Right cardiac atrium (tissue), 5 donors: ENCODE measurements at regions of chr1 and their contacts with region 1.

Region 1: DNA sequence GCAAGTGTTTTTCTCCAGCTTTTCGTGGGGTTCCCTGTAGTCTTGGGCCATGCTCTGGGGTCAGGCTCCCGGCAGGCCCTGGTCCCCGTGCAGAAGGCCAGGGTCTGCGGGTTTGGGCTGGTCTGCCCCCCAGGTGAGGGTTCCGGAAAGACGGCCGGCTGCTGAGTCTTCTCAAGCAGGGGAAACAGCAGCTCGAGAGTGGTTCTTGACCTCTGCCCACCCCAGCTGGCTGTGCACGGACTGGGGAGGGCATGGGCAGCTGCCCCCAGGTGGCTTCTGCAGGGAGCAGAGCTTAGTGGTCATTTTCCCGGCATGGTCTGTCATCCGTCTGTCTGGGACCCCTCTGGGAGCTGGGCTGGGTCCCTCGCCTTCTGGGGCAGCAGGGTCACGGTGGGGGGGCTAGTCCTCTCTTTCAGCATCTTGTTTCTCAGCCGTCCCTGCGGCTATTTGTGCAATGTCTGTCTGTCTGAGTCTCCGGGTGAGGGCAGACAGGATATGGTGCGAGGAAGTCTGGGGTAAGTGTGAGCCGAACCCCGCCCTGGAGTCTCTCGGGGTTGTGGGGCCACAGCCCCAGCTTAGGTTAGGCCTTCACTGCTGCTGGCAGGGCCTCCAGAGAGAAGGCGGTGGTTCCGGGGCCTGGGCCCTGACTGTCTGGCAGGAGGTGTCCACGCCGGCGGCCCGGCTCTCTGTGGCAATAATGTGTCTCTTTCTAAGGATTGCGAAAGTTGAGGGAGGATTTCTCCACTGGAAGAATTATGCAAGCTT is 6.1 kb downstream of the SKI start:
- DNase-seq: peak; percentile 96 to 98 (median 96)
- ATAC-seq: peak; percentile 81
- H3K4me3 ChIP-seq: peak overlapping the region; percentile 2
- H3K27ac ChIP-seq: peak overlapping the region; percentile 77
- H3K4me1 ChIP-seq: peaks cover 45% of the 10 kb centered on the region
- H3K27me3 ChIP-seq: no peaks in the 10 kb centered on the region

Region 2: GRCh38 chr1:1703796-1704195 is 530.4 kb before region 1 on chr1:
- intact Hi-C with region 1: no loop called
- DNase-seq: peak in 1 of 3 donors; percentile 46
- ATAC-seq: no peak
- H3K4me3 ChIP-seq: no peak overlapping the region
- H3K27ac ChIP-seq: no peak overlapping the region
- H3K4me1 ChIP-seq: no peaks in the 10 kb centered on the region
- H3K27me3 ChIP-seq: no peaks in the 10 kb centered on the region

Region 3: DNA sequence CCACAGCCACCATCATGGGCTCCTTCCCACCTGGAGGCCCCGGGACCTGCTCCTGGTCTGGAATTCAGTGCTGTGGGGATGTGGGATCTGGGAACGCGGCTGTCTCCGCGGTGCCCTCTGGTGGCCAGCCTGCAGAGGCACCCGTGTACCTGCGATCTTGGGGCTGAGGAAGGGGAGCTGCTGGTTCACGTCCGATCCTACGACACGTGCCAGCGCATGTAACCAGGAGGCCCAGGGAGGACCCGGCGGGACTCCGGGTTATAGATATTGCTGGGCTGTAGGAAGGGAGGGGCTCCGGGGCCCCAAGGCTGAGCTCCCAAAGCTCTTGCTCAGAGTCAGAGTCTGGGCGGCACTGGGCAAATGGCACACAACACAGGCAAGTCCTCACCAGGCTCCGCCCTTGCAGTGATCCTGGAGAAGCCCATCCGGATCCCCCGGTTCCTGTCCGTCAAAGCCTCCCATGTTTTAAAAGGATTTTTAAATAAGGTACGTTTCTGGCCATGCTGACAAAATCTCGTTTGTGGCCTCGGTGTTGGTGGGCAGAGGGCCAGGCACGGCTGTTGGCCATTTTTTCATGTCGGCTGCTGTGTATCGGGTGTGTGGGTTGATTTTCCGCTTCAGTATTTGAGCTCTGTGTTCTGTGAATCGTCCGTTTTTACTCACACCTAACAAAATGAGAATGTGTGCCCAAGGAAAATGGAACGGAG is 59.7 kb before region 1 on chr1:
- intact Hi-C with region 1: no loop called
- DNase-seq: peak; percentile 63 to 86 (median 80)
- ATAC-seq: peak; percentile 67 to 80
- H3K4me3 ChIP-seq: peak overlapping the region; percentile 36
- H3K27ac ChIP-seq: no peak overlapping the region
- H3K4me1 ChIP-seq: no peaks in the 10 kb centered on the region
- H3K27me3 ChIP-seq: no peaks in the 10 kb centered on the region

Region 4: DNA sequence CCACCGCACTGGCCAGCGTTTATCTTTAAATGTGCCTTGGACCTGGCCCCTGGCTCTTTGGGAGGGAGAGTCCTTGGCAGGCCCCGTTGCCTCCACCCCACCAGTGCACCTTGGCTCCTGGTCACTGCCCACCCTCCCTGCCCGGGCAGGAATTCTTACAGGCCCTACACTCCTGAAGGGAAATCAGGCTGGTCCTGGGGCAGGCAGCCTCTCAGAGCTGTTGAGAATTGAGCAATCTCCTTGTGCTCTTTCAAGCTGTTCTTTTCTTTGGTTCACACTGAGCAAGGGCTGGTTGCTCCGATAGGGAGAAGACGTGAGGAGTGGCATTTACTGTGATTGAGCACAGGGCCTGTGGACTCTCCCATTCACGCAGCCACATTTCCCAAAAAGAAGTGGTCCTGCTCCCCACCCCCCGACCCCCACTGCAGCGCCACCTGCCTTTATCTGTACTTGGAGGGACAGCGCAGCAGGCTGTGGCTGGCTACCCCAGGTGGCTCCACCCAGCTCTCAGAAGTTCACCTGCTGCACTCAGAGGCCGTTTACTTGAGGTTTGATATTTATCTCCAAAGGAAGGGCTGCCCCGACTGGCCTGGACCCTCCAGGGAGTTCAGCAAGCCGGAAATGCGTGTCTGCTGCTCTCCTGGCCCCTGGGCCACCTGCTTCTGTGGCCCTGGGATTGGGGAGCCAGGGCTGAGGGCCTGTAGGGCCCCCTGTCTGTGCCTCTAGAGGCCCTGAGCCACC is 41.8 kb after region 1 on chr1:
- intact Hi-C with region 1: no loop called
- DNase-seq: peak; percentile 42 to 73 (median 72)
- ATAC-seq: peak; percentile 23 to 36
- H3K4me3 ChIP-seq: no peak overlapping the region
- H3K27ac ChIP-seq: peak overlapping the region; percentile 32
- H3K4me1 ChIP-seq: peaks cover 55% of the 10 kb centered on the region
- H3K27me3 ChIP-seq: no peaks in the 10 kb centered on the region

Region 5: GRCh38 chr1:2300851-2301606 is 66.8 kb after region 1 on chr1:
- intact Hi-C with region 1: loop called in 2 of 4 experiments (anchors 5 kb)
- DNase-seq: peak; percentile 92 to 96 (median 94)
- ATAC-seq: peak; percentile 61 to 72
- H3K4me3 ChIP-seq: no peak overlapping the region
- H3K27ac ChIP-seq: peak overlapping the region; percentile 40
- H3K4me1 ChIP-seq: peaks cover 25% of the 10 kb centered on the region
- H3K27me3 ChIP-seq: no peaks in the 10 kb centered on the region

Region 6: GRCh38 chr1:2314803-2315673 is 80.9 kb after region 1 on chr1:
- intact Hi-C with region 1: loop called in 1 of 4 experiments (anchors 5 kb)
- DNase-seq: peak; percentile 76 to 91 (median 91)
- ATAC-seq: peak; percentile 20 to 22
- H3K4me3 ChIP-seq: peak overlapping the region; percentile 64
- H3K27ac ChIP-seq: peak overlapping the region; percentile 19
- H3K4me1 ChIP-seq: peaks cover 5% of the 10 kb centered on the region
- H3K27me3 ChIP-seq: no peaks in the 10 kb centered on the region

Region 7: DNA sequence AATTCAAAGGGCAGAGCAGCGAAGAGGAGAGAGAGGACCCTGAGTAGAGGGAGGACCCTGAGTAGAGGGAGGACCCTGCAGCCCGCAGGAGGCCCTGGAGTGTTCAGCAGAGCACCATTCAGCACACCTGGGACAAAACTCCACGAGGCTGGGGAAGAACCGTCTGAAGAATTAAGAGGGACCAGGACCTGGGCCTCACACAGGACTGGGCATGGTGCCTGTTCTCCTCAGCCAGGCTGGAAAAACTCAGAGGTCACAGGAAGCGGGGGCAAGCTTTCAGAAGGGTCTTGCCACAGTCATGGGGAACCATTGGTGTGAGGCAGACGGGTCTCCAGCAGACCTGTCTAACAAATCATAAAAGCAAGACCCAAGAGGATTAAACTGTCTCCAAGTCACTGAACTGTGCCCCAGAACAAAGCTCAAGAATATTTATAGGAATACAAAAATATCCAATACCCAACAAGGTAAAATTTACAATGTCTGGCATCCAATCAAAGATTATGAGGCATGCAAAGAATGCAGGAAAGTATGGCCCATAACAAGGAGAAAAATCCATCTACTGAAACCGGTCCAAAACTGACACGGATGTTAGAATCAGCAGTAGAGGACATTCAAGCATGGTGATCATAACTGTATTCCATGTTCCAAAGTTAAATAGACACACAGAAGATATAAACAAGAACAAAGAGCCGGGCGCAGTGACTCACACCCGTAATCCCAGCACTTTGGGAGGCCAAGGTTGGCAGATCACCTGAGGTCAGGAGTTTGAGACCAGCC is 126.6 kb after region 1 on chr1:
- intact Hi-C with region 1: no loop called
- DNase-seq: peak; percentile 1 to 25 (median 20)
- ATAC-seq: no peak
- H3K4me3 ChIP-seq: no peak overlapping the region
- H3K27ac ChIP-seq: no peak overlapping the region
- H3K4me1 ChIP-seq: no peaks in the 10 kb centered on the region
- H3K27me3 ChIP-seq: no peaks in the 10 kb centered on the region